Activated B cell treated with CpG ODN at 0.5 μM for 24 hours (primary cell): ENCODE measurements at regions of chr5 and their contacts with region 1.

Region 1: GRCh38 chr5:172806897-172807672 is 27.0 kb upstream of the ERGIC1 start:
- DNase-seq: peak; percentile 68
- ATAC-seq: peak; percentile 99
- H3K4me3 Mint-ChIP-seq: peak overlapping the region; percentile 82
- H3K27ac Mint-ChIP-seq: peak overlapping the region; percentile 85
- H3K4me1 Mint-ChIP-seq: peaks cover 15% of the 10 kb centered on the region
- H3K27me3 Mint-ChIP-seq: no peaks in the 10 kb centered on the region
- CTCF ChIP-seq: no peak

Region 2: GRCh38 chr5:172777881-172778814 is 28.9 kb before region 1 on chr5:
- CTCF ChIA-PET with region 1: no interaction called
- POLR2A ChIA-PET with region 1: interaction called, 79 read pairs
- intact Hi-C with region 1: loop called (anchors 1 kb)
- DNase-seq: no peak
- ATAC-seq: peak; percentile 6
- H3K4me3 Mint-ChIP-seq: peak overlapping the region; percentile 63
- H3K27ac Mint-ChIP-seq: peak overlapping the region; percentile 97
- H3K4me1 Mint-ChIP-seq: peaks cover 39% of the 10 kb centered on the region
- H3K27me3 Mint-ChIP-seq: no peaks in the 10 kb centered on the region
- CTCF ChIP-seq: no peak

Region 3: DNA sequence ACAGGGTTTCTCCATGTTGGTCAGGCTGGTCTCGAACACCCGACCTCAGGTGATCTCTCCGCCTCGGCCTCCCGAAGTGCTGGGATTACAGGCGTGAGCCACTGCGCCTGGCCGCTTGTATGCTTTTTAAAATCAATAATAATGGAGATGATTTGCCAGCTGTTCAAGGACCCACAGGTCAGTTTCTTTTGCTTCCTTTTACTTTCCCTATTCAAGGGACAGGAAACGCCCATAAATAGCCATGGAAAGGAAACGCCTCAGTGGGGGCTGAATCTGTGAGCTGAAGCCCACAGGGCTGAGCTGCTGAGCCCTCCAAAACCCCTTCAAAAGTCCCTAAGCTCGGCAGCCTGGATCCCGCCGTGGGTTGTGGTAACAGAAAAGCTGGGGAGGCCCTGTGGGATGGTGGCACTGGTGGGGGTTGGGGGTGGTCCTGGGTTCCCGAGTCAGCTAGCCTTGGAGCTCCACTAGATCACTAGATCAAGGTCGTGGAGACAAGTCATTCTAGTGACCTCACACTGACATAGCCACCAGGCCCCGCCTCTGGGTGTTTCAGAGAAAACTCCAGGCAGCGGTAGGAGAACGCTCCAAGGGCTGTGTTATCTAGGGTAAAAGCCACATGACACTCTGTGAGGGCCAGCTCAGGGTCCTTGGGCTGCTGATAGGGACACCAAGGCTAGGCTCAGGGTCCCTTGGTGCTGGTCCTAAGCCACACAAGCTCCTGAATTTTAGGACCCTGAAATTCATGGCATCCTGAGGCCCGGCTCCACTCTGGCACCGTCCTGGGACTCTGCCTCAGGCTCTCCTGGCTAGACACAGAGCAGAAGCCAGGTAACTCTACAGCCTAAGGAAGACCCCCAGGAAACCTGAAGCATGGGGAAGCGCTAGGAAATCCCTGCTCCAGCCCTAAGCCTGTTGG is 18.1 kb before region 1 on chr5:
- CTCF ChIA-PET with region 1: no interaction called
- POLR2A ChIA-PET with region 1: interaction called, 11 read pairs
- intact Hi-C with region 1: loop called (anchors 1 kb)
- DNase-seq: no peak
- ATAC-seq: peak; percentile 18
- H3K4me3 Mint-ChIP-seq: no peak overlapping the region
- H3K27ac Mint-ChIP-seq: no peak overlapping the region
- H3K4me1 Mint-ChIP-seq: peaks cover 14% of the 10 kb centered on the region
- H3K27me3 Mint-ChIP-seq: no peaks in the 10 kb centered on the region
- CTCF ChIP-seq: no peak

Region 4: DNA sequence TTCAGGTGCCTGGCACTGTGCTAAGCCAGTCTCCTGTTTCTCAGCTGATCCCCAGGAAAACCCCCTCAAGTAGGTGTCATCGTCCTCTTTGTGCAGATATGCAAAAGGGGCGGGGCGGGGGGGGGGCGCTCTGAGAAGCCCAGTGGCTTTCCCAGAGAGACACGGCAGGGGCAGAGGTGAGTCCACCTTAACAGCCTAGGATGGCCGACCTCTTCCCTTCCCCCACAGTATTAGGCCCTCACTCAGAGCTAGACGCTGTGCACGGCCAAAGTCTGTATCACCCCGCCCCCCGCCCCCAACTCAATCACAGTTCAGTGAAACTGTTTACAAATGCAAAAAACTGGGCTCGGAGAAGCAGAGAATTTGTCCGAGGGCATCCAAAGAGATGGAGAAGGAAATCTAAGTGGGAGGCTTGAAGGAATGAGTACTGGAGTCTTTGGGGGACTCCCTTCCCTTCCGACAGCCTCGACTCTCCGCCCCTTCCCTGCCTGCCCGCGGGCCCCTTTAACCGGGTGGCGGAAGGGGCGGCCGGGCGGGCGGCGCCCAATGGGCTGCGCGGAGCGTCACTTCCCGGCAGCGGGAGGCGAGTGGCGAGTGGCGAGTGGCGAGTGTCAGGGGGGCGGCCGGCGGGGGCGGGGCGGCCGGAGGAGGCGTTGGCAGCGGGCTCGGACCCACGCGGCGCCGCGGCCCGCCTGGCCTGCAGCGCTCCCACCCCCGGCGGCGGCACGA is 26.8 kb after region 1 on chr5 and contains the start of gene ERGIC1:
- CTCF ChIA-PET with region 1: no interaction called
- POLR2A ChIA-PET with region 1: interaction called, 15 read pairs
- intact Hi-C with region 1: loop called (anchors 1 kb)
- DNase-seq: peak; percentile 79
- ATAC-seq: peak; percentile 78
- H3K4me3 Mint-ChIP-seq: peak within 1 kb of the TSS; percentile 89
- H3K27ac Mint-ChIP-seq: peak within 1 kb of the TSS; percentile 92
- H3K4me1 Mint-ChIP-seq: peaks cover 48% of the 10 kb centered on the region
- H3K27me3 Mint-ChIP-seq: no peaks in the 10 kb centered on the region
- CTCF ChIP-seq: no peak
- total RNA-seq, gene ERGIC1: 69.6 and 72.5 TPM in 2 replicates

Region 5: GRCh38 chr5:172881691-172882370 is 74.7 kb after region 1 on chr5:
- CTCF ChIA-PET with region 1: no interaction called
- POLR2A ChIA-PET with region 1: interaction called, 11 read pairs
- intact Hi-C with region 1: no loop called
- DNase-seq: no peak
- ATAC-seq: peak; percentile 73
- H3K4me3 Mint-ChIP-seq: no peak overlapping the region
- H3K27ac Mint-ChIP-seq: peak overlapping the region; percentile 75
- H3K4me1 Mint-ChIP-seq: peaks cover 22% of the 10 kb centered on the region
- H3K27me3 Mint-ChIP-seq: no peaks in the 10 kb centered on the region
- CTCF ChIP-seq: no peak